Activated CD4-positive, alpha-beta T cell treated with anti-CD3 and anti-CD28 coated beads, Interleukin-2, amount 10 ng/mL, durations not matched to agents 24 days and 14 days (primary cell): ENCODE measurements at regions of chr7 and their contacts with region 1.

Region 1: DNA sequence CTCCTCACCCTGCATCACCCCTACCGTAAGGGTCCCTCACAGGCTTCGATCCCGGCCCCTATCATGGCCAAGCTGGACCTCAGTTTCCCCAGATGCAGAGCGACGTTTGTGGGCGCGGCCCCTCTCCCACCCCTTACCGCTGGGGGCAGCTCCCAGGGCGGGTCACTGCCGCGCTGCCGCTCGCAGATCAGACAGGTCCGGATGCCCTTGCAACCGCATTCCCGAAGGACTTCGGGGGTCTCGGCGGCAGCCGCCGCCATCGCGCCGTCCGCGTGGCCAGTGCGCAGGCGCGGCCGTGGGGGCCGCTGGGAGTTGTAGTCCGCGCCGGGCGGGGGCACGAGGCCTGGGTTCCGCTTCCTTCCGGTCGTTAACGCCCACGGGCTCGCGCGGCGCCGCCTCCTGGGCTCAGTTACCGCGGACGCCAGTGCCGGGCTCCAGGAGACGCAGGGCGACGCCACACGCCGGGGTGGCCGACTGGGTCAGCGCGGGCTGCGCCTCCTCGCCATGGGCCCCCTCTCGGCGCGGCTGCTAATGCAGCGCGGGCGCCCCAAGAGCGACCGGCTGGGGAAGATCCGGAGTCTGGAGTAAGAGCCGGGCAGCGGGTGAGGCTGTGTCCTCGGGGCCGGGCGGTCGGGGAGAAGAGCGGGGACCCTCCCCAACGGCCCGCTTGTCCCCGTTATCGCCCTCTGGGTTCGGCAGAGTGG is at the starts of genes ALKBH4 and LRWD1:
- DNase-seq: peak; percentile 99
- H3K4me3 Mint-ChIP-seq: peak within 1 kb of the TSS; percentile 95
- H3K27ac Mint-ChIP-seq: peak within 1 kb of the TSS; percentile 85
- H3K4me1 Mint-ChIP-seq: peaks cover 24% of the 10 kb centered on the region
- H3K27me3 Mint-ChIP-seq: no peaks in the 10 kb centered on the region
- total RNA-seq, gene ALKBH4: 9.9 and 10.9 TPM in 2 replicates
- total RNA-seq, gene LRWD1: 30.5 and 32.4 TPM in 2 replicates

Region 2: DNA sequence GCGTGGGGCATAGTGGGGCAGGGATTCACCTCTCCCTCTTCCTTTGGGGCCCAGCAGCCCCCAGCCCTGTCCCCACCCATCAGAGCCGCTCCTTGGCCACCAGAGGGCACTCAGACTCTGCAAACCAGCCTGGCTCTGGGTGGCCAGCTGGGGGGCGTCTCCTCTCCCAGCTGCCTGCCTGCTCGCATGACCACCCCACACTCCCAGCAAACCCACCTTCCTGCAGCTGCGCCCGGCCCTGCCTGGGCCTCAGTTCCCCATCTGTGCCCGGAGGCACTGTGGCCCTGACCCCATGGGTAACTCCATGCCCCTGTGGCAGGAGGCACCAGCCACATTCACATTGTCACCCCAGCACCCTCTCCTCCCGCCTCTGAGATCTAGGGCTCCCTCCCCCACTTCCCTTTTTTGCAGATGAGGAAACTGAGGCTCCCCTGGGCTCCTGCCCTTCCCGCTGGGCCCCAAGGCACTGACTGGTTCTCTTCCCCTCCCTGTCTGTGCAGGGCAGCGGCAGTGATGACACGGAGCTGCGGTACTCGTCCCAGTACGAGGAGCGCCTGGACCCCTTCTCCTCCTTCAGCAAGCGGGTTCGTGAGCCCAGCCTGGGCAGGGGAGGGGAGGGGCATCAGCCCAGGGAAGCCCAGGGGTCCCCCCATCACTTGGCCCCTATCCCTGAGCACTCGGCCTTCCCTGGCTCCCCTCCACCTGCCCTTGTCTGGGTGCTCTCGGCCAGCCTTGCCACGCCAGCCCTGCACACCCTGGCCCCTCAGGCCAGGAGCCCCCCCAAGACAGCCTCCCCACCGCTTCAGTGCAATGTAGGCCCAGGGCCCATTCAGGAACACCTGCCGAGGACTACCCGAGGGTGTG is 185.0 kb before region 1 on chr7:
- intact Hi-C with region 1: loop called (anchors 10 kb)
- DNase-seq: peak; percentile 85
- H3K4me3 Mint-ChIP-seq: no peak overlapping the region
- H3K27ac Mint-ChIP-seq: no peak overlapping the region
- H3K4me1 Mint-ChIP-seq: peaks cover 7% of the 10 kb centered on the region
- H3K27me3 Mint-ChIP-seq: peaks cover 6% of the 10 kb centered on the region

Region 3: DNA sequence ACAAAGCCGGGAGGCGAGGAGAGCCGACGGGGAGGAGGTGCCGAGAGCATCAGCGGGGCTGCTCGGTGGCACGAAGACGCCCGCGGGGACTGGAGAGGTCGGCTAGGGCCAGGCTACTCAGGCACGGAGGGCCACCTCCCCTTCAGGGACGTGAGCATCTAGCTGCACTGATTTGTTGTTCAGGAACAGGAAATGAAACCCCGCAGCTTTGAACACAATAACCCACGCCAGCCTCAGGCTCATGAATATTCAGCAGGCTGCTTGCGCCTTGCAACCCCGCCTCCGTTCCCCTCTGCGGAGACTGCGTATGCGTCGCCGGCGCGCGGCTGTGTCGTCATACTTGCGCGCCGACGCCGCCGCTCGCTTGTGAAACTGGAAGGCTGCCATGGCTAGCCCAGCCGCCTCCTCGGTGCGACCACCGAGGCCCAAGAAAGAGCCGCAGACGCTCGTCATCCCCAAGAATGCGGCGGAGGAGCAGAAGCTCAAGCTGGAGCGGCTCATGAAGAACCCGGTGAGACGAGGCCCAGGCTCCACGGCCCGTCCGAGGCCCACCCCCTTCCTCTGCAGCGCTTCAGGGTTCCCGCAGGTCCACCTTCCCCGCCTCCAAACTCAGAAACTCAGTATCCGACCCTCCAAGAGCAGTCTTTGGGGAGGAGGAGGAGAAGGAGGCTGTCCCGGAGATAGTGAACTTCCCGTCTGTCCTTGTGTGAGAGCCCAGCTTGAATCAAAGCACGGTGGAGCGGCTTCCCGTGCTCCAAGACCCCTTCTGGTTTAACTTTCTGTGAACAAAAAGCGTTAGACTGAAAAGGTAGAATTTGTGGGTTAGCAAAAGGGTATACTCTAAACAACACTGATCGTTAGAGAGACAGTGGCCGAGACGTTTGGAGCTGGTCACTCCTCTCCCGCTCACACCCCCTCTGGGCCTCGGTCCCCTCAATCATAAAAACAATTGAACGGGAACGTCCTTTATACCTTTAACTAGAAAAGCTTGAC is 68.4 kb before region 1 on chr7 and contains the start of gene PRKRIP1:
- intact Hi-C with region 1: loop called (anchors 1 kb)
- DNase-seq: peak; percentile 95
- H3K4me3 Mint-ChIP-seq: peak within 1 kb of the TSS; percentile 92
- H3K27ac Mint-ChIP-seq: peak within 1 kb of the TSS; percentile 87
- H3K4me1 Mint-ChIP-seq: peaks cover 13% of the 10 kb centered on the region
- H3K27me3 Mint-ChIP-seq: no peaks in the 10 kb centered on the region
- total RNA-seq, gene PRKRIP1: 26.4 and 31.7 TPM in 2 replicates

Region 4: GRCh38 chr7:102404005-102404861 is 60.5 kb before region 1 on chr7:
- intact Hi-C with region 1: loop called (anchors 2 kb)
- DNase-seq: peak; percentile 84
- H3K4me3 Mint-ChIP-seq: no peak overlapping the region
- H3K27ac Mint-ChIP-seq: peak overlapping the region; percentile 41
- H3K4me1 Mint-ChIP-seq: peaks cover 10% of the 10 kb centered on the region
- H3K27me3 Mint-ChIP-seq: no peaks in the 10 kb centered on the region

Region 5: DNA sequence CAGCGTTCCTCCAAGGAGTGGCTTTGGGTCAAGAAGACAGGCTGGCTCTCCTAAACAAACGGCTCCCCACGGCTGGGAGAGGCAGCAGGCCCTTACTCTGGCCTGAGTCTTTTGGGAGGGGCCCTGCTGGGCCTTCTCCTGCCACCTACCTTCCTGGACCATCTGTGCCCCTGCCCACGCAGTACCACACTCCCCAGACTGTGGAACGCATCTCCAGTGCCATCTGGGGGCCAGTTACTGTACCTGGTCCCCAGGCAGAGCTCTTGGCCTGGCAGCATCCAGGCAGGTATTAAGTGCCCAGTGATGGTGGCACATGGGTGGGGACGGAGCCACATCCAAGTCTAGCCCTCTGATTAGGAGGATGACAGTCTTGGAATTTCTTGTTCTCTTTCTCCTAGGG is 14.5 kb before region 1 on chr7:
- intact Hi-C with region 1: no loop called
- DNase-seq: peak; percentile 78
- H3K4me3 Mint-ChIP-seq: no peak overlapping the region
- H3K27ac Mint-ChIP-seq: no peak overlapping the region
- H3K4me1 Mint-ChIP-seq: no peaks in the 10 kb centered on the region
- H3K27me3 Mint-ChIP-seq: no peaks in the 10 kb centered on the region